ENCODE measurements at regions of chr18 and their contacts with region 1.

Region 1: DNA sequence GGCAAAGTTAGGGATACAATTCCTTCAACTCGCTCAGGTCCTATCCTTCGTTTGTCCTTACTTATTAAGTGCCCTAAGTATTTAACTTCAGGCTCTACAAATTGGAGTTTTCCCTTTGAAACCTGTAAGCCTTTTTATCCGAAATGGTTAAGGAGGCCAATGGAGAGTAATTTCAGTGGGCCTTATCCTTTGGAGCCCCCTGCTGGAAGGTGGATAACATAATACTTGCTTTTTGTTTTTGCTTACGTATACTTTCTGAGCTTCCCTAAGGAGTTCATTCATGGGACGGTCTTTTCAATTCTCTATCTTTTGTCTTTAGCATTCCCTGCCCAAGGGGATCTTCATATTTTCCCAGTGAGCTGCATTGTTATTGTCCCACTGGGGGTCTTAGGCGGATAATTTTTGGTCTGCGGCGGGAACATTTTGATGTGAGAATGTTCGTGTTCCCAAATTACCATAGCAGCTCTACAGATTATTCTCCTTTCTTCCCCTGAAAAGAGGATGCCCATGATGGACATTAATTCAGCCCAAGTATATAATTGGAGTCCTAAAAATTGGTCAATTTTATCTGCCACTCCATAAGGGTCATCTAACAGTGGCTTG is 34.4 kb upstream of the TRAPPC8 start:
- DNase-seq: no peak
- ATAC-seq: peak; percentile 63 to 68

Region 2: GRCh38 chr18:31563778-31564177 is 413.6 kb before region 1 on chr18:
- intact Hi-C with region 1: loop called in 1 of 2 experiments (anchors 10 kb)
- DNase-seq: no peak
- ATAC-seq: no peak

Region 3: GRCh38 chr18:32289483-32290075 is 312.2 kb after region 1 on chr18:
- intact Hi-C with region 1: no loop called
- DNase-seq: no peak
- ATAC-seq: peak in 1 of 2 donors; percentile 65

Region 4: GRCh38 chr18:32542221-32542798 is 564.9 kb after region 1 on chr18:
- intact Hi-C with region 1: no loop called
- DNase-seq: no peak
- ATAC-seq: no peak